Transverse colon (tissue), 4 donors: ENCODE measurements at regions of chr11 and their contacts with region 1.

Region 1: DNA sequence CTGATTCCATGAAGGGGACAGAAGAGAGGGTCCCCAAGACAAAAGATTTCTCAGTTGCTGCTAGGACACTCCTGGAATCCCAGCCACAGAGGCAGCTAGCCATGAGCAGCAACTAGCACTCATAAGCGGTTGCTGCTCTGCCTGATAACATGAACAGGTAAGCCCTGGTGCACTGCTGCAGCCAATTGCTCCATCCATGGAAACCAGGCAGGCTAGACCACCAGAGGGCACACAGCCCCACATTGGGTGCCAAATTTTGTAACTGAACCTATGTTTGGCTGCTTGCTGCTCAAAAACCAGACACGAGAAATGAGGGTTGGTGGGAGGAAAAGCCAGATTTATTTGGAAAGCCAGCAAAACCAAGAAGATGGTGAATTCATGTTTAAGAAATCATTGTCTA is 21.9 kb upstream of the QSER1 start:
- DNase-seq: no peak
- H3K4me3 ChIP-seq: no peak overlapping the region
- H3K27ac ChIP-seq: no peak overlapping the region
- H3K4me1 ChIP-seq: no peaks in the 10 kb centered on the region
- H3K27me3 ChIP-seq: no peaks in the 10 kb centered on the region
- CTCF ChIP-seq: peak in 1 of 5 experiments; percentile 4
- EP300 ChIP-seq: no peak
- POLR2A ChIP-seq: no peak

Region 2: DNA sequence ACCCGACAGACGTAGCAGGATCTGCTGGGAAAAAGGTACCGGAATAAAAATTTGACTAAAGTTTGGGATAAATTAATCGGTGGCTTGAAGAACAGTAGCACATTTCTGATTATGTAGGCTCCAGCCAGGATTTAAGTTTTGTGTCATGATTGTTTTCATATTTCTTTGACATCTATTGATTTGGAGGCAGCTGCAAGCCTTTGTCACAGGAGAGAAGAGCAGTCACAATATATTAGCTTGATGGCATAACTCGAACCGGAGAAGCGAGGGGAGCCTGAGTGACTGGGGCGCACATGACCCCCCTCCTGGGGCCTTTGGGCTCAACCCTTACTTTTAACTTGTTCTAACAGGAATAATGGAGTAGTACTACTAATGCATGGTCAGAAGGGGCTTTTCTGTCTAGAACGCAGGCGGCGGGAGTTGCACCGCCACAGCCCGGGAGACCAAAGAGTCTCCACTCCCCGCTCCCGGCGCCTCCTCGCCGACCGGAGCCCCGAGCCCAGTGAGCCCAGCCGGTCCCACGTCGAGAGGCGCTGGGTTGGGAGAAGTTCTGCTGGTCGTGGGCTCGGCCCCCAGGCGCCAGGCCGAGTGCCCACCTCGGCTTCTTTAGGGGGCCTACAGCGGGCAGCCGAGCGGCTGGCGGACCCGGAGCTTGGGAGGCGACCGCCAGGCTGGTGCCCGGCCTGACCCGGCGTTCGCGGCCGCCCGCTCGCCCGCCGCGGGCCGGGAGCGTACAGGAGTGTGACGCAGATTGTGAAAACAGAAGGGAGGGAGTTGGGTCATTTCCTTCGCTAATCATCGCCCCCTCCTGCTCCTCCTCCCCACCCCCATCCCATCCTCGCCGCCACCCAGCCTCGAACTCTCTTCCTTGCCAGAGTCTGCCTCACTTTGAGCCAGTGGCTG is 1043.9 kb before region 1 on chr11:
- in situ Hi-C with region 1: no loop called
- intact Hi-C with region 1: loop called (anchors 5 kb)
- DNase-seq: no peak
- H3K4me3 ChIP-seq: no peak overlapping the region
- H3K27ac ChIP-seq: no peak overlapping the region
- H3K4me1 ChIP-seq: peaks cover 0 to 11% (median 4%) of the 10 kb centered on the region in 4 donors
- H3K27me3 ChIP-seq: peaks cover 99% of the 10 kb centered on the region
- CTCF ChIP-seq: no peak
- EP300 ChIP-seq: no peak
- POLR2A ChIP-seq: no peak